ENCODE measurements at regions of chr1 and their contacts with region 1.

Region 1: GRCh38 chr1:93814059-93814794 is 64.8 kb downstream of the DNTTIP2 start:
- DNase-seq: no peak
- ATAC-seq: peak; percentile 73

Region 2: DNA sequence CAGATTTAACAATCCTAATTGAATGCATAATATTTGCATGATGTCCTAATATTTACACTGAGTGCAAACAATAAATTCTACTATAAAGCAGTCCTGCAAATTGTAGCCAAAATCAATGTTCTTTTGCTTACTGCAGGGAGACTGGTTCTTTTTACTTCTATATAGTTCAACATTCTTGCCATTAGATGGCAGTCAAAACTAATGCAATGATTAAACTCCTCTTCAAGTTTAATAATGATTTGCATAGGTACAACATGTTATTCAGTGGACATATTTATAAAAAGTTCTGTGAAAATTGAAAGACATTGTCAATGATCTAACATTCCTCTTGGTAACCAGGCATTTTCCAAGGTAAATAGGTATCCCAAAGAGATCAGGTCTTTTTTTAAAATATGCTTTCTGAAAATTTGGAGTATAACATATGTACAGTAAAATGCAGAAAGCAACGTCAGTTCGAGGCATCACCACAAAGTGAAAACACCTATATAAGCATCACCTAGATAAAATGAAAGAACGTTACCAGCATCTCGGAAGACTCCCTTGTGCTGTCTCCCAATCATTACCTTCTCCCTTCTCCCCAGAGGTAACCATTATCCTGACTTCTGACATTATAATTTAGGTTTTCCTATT is 376.1 kb before region 1 on chr1:
- intact Hi-C with region 1: loop called (anchors 2 kb)
- DNase-seq: no peak
- ATAC-seq: no peak

Region 3: GRCh38 chr1:93567255-93567918 is 246.8 kb before region 1 on chr1:
- intact Hi-C with region 1: no loop called
- DNase-seq: no peak
- ATAC-seq: peak; percentile 43

Region 4: GRCh38 chr1:93629099-93630059 is 184.8 kb before region 1 on chr1:
- intact Hi-C with region 1: loop called (anchors 1 kb)
- DNase-seq: no peak
- ATAC-seq: peak; percentile 59

Region 5: GRCh38 chr1:93749894-93750301 is 64.3 kb before region 1 on chr1:
- intact Hi-C with region 1: loop called (anchors 5 kb)
- DNase-seq: no peak
- ATAC-seq: no peak

Region 6: DNA sequence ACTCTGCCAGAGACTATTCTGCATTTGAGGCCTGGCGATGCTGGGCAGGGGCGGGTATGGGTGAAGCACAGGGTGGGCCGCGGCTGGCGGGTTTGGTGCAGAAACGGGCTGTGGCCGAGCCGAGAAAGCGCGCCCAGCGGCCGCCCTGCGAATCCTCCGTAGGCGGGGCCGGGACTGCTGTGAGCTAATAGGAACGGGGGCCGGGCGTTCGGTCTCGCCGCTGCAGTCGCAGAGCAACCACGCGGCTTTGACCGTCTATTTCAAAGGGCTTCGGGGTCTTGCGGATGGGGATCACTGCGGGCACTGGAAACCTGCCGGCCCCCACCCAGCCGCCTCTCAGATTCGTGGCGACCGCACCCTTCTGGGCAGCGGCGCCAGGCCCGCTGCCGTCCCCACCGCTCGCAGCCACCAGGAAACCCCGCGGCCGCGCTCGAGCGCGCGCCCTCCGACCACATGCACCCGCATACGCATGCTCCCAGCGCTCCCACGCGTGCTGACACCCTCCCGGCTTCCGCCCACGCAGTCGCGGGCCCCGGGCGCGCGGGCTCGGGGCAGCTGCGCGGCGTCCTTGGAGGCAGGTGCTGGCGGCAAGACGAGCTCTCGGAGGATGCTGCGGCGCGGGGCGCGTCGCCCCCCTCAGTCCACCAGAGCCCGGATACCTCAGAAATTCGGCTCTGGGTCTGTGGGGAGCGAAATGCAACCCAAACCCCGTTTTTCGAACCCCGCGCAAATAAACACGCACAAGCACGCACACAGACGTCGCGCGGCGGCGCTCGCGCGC is 32.2 kb after region 1 on chr1:
- intact Hi-C with region 1: no loop called
- DNase-seq: peak; percentile 97
- ATAC-seq: peak; percentile 77